ENCODE measurements at regions of chr4 and their contacts with region 1.

Region 1: DNA sequence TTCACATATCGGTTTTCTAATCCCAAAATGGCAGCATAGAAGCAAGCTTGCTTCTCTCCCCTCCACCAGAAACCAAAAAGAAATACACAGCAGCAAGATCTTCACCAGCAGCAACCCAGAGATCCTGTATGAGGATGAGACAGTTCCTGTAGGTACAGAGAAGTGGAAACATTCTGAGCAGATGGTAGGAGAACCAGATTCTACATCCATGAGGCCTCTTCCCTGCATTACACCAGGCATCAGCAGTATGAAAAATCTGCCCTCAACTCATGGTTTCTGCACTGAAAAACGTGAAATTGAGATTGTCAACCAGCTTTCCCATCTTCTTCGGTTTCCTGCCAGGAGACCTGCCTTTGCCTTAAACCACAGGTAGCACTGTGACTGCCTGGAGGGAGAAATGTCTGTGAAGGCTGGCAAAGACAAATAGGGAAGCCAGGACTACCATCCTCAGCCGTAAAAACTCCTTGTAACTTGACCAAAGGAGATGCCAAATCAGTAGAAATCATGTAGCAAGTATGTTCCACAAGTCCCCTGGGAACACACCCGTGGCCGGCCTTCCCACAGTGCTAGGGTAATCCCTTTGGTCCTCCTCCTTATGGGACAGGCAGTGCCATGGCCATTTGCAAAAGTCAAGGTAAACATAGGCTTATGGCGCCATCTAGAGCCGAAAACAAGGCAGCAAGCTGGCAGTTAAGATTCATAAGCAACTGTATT is 24.0 kb upstream of the MTHFD2L start:
- DNase-seq: peak; percentile 87
- H3K4me3 ChIP-seq: no peak overlapping the region
- H3K27ac ChIP-seq: no peak overlapping the region
- H3K4me1 ChIP-seq: no peaks in the 10 kb centered on the region
- H3K27me3 ChIP-seq: no peaks in the 10 kb centered on the region
- CTCF ChIP-seq: peak; percentile 57

Region 2: DNA sequence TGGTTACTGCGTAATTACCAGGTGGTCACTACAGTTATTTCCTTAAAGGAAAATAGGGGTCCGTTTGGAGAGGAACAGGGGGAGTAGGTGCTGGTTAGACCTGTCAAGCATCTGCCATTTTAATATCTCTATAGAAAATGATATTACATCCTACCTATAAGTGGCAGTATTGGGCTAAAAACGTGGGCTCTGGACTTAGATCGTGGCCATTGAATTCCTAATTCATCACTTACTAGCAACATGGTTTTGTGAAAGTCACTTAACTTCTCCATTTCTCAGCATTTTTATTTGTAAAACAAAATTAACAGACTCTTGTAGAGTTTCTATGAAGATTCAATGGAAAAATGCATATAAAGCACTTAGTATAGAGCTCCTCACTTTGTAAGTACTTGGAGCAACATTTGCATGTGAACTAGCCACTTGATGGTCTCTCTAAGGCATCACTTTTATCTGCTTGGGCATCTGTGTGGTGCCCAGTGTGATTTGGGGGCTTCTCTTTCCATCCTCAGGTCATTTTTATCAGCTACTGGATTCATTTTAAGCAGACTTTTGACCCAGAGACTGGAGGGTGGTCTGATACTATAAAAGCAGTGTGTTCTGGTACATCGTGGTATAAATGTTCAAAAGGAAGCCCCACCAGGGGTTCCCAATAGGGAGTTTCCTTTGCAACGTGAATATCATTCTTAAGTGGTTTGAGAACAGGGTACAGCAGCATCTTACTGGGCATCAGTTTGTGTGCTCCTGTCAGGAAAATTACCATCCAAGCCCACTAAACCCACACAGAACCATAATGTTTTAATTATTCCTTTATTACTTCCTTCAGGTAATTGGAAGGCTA is 471.0 kb before region 1 on chr4:
- intact Hi-C with region 1: loop called (anchors 5 kb)
- DNase-seq: no peak
- H3K4me3 ChIP-seq: no peak overlapping the region
- H3K27ac ChIP-seq: no peak overlapping the region
- H3K4me1 ChIP-seq: no peaks in the 10 kb centered on the region
- H3K27me3 ChIP-seq: no peaks in the 10 kb centered on the region
- CTCF ChIP-seq: peak; percentile 35

Region 3: DNA sequence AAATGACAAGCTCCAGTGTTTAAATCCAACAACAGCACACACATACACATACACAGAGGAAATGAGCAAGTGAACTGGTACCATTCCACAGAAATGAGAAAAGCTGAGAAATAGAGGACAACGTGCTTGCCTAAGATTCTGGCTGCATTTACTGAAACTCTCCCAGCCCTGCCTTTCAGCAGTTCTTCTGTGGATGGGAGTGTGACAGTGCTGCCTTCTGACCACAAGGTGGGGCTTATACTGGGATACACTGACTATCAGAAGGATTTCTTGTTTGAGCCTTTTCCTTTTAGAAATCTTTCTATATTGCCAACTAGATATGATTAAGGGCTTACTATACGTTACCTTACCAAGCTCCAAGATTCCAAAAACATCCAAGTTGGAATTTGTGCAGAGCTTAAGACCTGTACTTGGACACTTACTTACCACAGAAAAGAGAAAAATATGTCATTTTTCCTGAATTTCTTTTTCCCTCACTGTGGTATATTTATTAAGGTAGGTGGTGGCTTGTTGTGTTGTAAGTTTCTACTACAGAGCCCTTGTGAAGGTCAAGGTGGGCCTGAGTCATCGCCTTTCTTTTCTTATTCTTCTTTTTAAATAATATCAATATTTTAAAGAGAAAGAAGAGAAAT is 404.3 kb before region 1 on chr4:
- intact Hi-C with region 1: loop called (anchors 5 kb)
- DNase-seq: peak; percentile 73
- H3K4me3 ChIP-seq: no peak overlapping the region
- H3K27ac ChIP-seq: no peak overlapping the region
- H3K4me1 ChIP-seq: no peaks in the 10 kb centered on the region
- H3K27me3 ChIP-seq: no peaks in the 10 kb centered on the region
- CTCF ChIP-seq: peak; percentile 73

Region 4: DNA sequence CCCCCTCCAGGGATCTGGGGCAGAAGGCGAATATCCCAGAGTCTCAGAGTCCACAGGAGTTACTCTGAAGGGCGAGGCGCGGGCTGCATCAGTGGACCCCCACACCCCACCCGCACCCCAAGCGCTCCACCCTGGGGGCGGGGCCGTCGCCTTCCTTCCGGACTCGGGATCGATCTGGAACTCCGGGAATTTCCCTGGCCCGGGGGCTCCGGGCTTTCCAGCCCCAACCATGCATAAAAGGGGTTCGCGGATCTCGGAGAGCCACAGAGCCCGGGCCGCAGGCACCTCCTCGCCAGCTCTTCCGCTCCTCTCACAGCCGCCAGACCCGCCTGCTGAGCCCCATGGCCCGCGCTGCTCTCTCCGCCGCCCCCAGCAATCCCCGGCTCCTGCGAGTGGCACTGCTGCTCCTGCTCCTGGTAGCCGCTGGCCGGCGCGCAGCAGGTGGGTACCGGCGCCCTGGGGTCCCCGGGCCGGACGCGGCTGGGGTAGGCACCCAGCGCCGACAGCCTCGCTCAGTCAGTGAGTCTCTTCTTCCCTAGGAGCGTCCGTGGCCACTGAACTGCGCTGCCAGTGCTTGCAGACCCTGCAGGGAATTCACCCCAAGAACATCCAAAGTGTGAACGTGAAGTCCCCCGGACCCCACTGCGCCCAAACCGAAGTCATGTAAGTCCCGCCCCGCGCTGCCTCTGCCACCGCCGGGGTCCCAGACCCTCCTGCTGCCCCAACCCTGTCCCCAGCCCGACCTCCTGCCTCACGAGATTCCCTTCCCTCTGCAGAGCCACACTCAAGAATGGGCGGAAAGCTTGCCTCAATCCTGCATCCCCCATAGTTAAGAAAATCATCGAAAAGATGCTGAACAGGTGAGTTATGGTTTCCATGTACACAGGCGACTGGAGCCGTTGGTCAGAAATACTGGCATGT is 264.6 kb before region 1 on chr4 and contains the start of gene CXCL1:
- intact Hi-C with region 1: loop called (anchors 10 kb)
- DNase-seq: peak; percentile 85
- H3K4me3 ChIP-seq: peak within 1 kb of the TSS; percentile 49
- H3K27ac ChIP-seq: peak within 1 kb of the TSS; percentile 53
- H3K4me1 ChIP-seq: no peaks in the 10 kb centered on the region
- H3K27me3 ChIP-seq: no peaks in the 10 kb centered on the region
- CTCF ChIP-seq: no peak
- total RNA-seq, gene CXCL1: 8.4 to 19.6 TPM

Measured in colonic mucosa (tissue), 4 donors.